GM18951 (cell line): ENCODE measurements at regions of chr1 and their contacts with region 1.

Region 1: DNA sequence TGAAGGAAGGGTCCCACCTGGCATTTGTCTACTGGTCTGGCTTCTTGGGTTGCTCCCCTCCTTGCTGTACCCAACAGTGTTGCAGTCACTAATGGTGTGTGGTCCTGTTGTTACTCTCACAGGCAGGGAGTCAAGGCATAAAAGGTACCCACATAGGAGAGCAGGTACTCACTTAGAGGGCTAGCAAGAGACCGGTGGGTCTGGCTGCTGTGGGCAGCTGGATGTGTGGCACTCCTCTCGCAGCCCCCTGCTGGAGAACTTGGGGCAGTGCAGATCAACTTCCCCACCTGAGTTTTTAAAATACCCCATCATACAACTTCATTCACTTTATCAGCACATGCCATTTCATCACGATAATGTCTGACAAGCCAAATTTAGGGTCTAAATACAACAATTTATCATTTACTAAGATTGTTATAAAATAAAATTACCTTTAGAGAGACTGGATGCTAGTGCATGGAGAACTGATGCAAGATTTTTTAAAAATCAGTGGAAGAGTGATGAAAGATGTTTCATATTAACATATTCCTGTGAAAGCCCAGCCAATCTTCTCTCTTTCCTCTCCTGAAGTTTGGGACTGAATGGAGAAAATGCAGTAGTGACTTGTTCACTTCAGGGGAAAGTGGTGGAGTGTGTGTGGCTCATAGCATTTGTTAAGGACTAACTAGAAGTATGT is 42.8 kb downstream of the ACP6 start:
- POLR2A ChIP-seq: no peak

Region 2: GRCh38 chr1:147273409-147274336 is 353.9 kb before region 1 on chr1:
- in situ Hi-C with region 1: loop called (anchors 10 kb)
- POLR2A ChIP-seq: no peak

Region 3: DNA sequence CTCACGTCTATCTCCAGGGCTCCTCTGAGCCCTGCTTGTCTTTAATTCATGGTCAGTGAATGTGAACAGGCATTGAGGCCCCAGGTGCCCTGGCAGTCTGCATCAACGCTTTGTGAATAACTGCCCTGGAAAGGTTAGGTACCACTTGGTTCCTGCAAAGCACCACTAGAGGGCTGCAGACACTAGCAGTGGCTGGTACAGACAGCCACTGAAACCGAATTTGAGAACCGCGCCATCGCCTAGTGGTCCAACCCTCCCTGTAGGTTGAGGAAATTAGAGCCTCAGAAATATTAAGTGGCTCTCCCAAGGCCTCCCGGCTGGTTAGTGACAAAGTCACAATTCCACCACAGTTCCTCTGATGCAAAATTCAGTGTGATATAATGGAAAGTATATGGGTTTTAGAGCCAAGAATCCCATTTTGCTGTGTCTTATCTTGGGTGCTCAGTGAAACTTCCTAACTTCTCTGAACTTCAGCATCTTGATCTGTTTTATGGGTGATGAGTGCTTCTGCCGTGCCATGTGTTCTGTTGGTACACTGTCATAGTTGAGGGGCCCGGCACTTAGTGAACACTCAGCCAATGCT is 132.5 kb before region 1 on chr1:
- in situ Hi-C with region 1: loop called (anchors 10 kb)
- POLR2A ChIP-seq: no peak

Region 4: DNA sequence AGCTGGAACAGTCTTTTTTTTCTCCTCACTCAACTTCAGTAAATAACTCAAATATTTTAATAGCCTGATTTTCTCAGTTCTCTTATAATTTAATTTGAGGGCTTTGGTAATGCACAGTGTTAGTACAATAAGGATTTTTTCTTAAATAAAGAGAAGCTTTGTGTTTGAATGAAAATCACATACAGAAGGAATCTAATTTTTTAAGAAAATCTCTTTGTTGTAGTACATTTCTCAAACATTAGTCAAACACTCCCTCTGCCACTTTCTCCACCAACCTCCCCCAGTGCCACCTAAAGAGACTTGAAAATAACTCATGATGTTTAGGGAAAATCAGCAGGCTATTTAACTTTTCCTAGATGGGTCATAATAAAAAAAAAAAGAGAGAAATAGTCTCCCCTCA is 85.0 kb after region 1 on chr1:
- in situ Hi-C with region 1: no loop called
- POLR2A ChIP-seq: no peak